Panc1 (cell line): ENCODE measurements at regions of chr19 and their contacts with region 1.

Region 1: DNA sequence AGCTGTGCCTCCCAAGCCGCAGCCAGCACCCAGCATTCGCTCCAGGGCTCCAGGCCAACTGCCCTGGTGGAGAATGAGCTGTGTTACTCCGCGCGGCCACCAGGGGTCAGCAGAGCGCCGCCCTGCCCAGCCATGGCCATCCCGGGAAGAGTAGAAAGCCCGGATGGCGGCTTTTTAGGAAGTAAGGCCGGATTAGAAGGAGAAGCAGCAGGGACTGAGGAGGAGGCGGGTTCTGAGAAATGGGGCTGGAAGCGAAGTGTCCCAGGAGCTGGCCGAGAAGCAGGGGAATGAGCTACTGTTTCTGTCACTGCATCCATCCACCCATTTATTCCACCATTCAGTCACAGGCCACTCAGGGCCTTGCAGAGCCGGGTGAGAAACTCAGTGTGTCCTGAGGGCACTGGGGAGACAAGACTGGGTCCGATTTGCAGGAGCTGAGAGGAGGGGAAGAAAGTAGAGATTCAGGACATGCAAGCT is 6.6 kb upstream of the NPAS1 start:
- DNase-seq: no peak
- ATAC-seq: peak; percentile 95
- H3K4me3 ChIP-seq: no peak overlapping the region; a peak in 1 of 4 replicates
- H3K27ac ChIP-seq: no peak overlapping the region
- H3K4me1 ChIP-seq: no peaks in the 10 kb centered on the region
- H3K27me3 ChIP-seq: no peaks in the 10 kb centered on the region
- CTCF ChIP-seq: peak; percentile 96

Region 2: GRCh38 chr19:47045867-47046470 is 32.9 kb after region 1 on chr19:
- CTCF ChIA-PET with region 1: no interaction called
- POLR2A ChIA-PET with region 1: no interaction called
- in situ Hi-C with region 1: no loop called
- intact Hi-C with region 1: no loop called
- DNase-seq: no peak
- ATAC-seq: no peak
- H3K4me3 ChIP-seq: no peak overlapping the region
- H3K27ac ChIP-seq: no peak overlapping the region
- H3K4me1 ChIP-seq: no peaks in the 10 kb centered on the region
- H3K27me3 ChIP-seq: no peaks in the 10 kb centered on the region
- CTCF ChIP-seq: no peak

Region 3: DNA sequence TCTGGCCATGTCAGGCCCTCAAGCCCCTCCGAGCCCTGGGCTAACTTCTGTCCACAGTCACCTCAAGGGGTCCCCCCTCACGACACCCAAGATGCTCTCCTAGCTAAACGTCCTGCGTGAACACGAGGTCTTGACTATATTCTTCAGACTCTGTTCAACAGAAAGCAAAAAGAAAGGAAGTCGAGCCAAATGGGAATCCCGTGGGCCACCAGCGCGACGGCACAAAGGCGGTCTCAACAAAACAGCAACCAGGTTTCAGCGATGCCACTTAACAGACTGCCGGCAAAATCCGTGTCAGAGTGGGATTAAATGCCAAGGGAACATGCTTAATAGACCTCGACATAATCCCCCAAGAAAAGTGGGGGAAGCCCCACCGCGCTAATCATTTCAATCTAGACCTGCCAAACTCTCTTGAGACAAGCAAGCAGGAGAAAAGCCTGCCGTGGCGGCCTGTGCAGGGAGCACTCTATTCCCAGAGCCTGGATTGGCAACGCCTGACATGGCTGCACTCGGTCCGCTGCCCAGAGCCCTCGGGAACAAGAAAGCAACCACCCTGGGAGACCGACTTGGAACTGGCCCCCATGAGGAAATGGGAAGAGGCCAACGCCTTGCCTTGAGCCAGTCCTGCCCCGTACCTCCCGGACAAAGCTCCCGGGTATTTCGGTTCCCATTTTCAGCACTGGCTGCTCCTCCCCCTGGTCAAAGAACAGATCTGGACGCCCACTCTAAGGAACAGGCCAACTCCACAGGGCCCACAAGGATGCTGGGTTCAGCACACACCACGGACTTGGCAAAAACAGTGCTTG is 84.5 kb after region 1 on chr19:
- CTCF ChIA-PET with region 1: no interaction called
- POLR2A ChIA-PET with region 1: no interaction called
- in situ Hi-C with region 1: no loop called
- intact Hi-C with region 1: no loop called
- DNase-seq: no peak
- ATAC-seq: no peak
- H3K4me3 ChIP-seq: no peak overlapping the region
- H3K27ac ChIP-seq: 0 out of 2 replicates have a peak overlapping the region, but pooled peaks have one; percentile 15
- H3K4me1 ChIP-seq: peaks cover 3% of the 10 kb centered on the region; the same call in 1 of the 2 replicates
- H3K27me3 ChIP-seq: no peaks in the 10 kb centered on the region
- CTCF ChIP-seq: no peak

Region 4: GRCh38 chr19:47112997-47113849 is 100.1 kb after region 1 on chr19 and contains the start of gene ZC3H4:
- CTCF ChIA-PET with region 1: interaction called, 12 read pairs
- POLR2A ChIA-PET with region 1: no interaction called
- in situ Hi-C with region 1: no loop called
- intact Hi-C with region 1: no loop called
- DNase-seq: peak; percentile 90
- ATAC-seq: peak; percentile 92
- H3K4me3 ChIP-seq: peak within 1 kb of the TSS; percentile 85 to 97
- H3K27ac ChIP-seq: peak within 1 kb of the TSS; percentile 97
- H3K4me1 ChIP-seq: peaks cover 20% of the 10 kb centered on the region
- H3K27me3 ChIP-seq: no peaks in the 10 kb centered on the region
- CTCF ChIP-seq: no peak
- total RNA-seq, gene ZC3H4: 42.7 TPM

Region 5: GRCh38 chr19:48203732-48204628 is 1190.9 kb after region 1 on chr19:
- CTCF ChIA-PET with region 1: no interaction called
- POLR2A ChIA-PET with region 1: no interaction called
- in situ Hi-C with region 1: no loop called
- intact Hi-C with region 1: no loop called
- DNase-seq: peak; percentile 54
- ATAC-seq: peak; percentile 100
- H3K4me3 ChIP-seq: peak overlapping the region; percentile 68 to 93
- H3K27ac ChIP-seq: peak overlapping the region; percentile 93
- H3K4me1 ChIP-seq: peaks cover 8% of the 10 kb centered on the region; the same call in 1 of the 2 replicates
- H3K27me3 ChIP-seq: no peaks in the 10 kb centered on the region
- CTCF ChIP-seq: no peak